Posterior vena cava (tissue), 2 donors: ENCODE measurements at regions of chr2 and their contacts with region 1.

Region 1: GRCh38 chr2:112980537-112980936 is 2.7 kb downstream of the IL36G start:
- DNase-seq: no peak

Region 2: GRCh38 chr2:112916145-112916571 is 64.4 kb before region 1 on chr2:
- intact Hi-C with region 1: no loop called
- DNase-seq: no peak

Region 3: DNA sequence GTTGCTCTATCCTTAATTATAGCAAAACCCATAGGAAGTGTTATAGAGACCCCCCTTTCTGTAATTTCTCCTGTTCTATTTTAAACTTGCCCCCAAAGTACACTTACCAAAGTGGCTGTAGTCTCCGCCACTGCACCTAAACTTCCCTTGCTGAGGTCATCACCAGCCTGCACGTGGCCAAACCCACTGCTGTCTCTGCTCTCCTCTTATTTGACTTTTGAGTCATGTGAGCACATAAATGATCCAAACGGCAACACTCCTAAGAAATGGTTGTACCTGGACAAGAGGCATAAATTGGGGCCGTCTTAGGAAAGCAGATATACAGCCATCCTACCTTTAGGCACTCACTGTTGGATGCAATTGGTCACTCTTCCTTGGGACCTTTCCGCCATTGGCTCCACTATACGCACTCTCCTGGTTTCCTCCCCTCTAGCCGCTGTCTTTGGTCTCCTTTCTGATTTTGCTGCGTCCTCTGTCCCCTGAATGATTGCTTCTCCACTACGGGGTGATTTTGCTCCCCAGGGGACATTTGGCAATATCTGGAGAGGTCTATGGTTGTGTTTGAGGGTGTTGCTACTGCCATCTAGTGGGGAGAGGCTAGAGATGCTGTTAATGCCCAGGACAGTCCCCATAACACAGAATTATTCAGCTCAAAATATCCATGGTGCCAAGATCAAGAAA is 22.0 kb before region 1 on chr2:
- intact Hi-C with region 1: no loop called
- DNase-seq: no peak

Region 4: GRCh38 chr2:114119862-114120261 is 1139.3 kb after region 1 on chr2:
- intact Hi-C with region 1: loop called in 1 of 2 experiments (anchors 5 kb)
- DNase-seq: no peak